Natural killer cell (primary cell): ENCODE measurements at regions of chr9 and their contacts with region 1.

Region 1: DNA sequence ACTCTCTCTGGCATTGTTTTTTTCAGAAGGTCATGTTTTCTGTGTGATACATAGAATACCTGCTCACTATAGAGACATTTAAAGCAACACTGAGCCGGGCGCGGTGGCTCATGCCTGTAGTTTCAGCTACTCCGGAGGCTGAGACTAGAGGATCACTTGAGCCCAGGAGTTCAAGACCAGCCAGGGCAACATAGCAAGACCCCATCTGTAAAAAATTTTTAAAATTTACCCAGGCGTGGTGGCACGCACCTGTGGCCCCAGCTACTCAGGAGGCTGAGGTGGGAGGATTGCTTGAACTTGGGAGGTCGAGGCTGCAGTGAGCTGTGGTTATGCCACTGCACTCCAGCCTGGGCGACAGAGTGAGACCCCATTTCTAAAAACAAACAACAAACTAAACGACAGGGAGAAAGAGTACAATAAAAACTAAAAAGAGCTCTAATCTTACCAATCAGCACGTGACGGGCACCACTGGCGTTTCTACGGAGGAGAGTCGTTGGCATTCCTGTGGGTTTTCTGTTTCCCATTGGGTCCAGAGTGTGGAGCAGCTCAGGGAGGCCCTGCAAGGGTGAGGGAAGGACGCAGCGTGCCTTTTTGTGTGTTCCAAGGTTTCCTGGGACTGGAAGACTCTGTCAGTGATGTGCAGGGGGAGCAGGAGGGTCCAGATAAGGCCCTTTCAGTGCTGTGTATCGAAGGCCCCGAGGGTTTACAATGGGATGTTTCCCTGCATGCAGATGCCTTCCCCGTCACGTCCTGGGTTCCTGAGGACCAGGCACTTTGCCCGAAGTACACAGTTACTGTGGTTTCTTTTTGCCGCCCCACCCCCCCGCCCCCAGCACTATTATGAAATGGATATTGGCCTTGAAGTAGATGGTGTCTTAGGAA is 7.2 kb upstream of the RNU6ATAC start:
- DNase-seq: no peak
- ATAC-seq: no peak
- H3K4me3 ChIP-seq: no peak overlapping the region
- H3K4me3 Mint-ChIP-seq: no peak overlapping the region
- H3K27ac ChIP-seq: no peak overlapping the region
- H3K27ac Mint-ChIP-seq: no peak overlapping the region
- H3K4me1 ChIP-seq: peaks cover 27% of the 10 kb centered on the region
- H3K4me1 Mint-ChIP-seq: no peaks in the 10 kb centered on the region
- H3K27me3 ChIP-seq: no peaks in the 10 kb centered on the region
- H3K27me3 Mint-ChIP-seq: peaks cover 0 to 3% of the 10 kb centered on the region in 2 donors
- CTCF ChIP-seq: no peak

Region 2: DNA sequence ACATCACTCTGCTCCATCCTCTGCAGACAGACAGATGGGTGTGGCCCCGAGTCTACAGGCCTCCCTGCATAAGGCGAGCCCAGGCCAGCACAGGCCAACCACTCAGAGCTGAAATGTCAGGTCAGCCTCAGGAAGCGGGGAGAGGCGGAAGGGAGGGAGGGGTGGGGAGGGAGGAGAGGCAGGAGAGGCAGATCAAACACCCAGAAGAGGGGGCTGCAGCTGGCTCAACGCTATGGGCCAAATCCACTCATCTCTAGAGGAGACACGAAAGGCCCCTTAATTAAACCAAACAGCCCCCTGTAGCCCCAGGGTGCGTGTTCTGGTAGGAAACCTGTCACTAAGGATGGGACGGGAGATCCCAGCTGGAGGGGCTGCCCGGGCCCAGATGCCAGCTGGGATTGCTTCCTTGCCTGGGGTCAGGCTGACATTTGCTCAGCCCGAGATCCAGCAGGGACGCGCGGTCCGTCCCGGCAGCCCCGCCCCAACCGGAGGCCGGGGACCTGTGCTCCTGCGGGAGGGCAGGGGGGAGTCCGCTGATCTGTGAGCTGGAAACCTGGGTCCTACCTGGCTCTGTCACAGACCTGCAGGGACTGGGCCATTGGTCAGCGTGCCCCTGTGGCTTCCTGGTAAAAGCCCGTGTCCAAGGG is 336.2 kb before region 1 on chr9:
- intact Hi-C with region 1: no loop called
- DNase-seq: no peak
- ATAC-seq: no peak
- H3K4me3 ChIP-seq: no peak overlapping the region
- H3K4me3 Mint-ChIP-seq: no peak overlapping the region
- H3K27ac ChIP-seq: no peak overlapping the region
- H3K27ac Mint-ChIP-seq: no peak overlapping the region
- H3K4me1 ChIP-seq: no peaks in the 10 kb centered on the region
- H3K4me1 Mint-ChIP-seq: no peaks in the 10 kb centered on the region
- H3K27me3 ChIP-seq: no peaks in the 10 kb centered on the region
- H3K27me3 Mint-ChIP-seq: no peaks in the 10 kb centered on the region
- CTCF ChIP-seq: no peak

Region 3: DNA sequence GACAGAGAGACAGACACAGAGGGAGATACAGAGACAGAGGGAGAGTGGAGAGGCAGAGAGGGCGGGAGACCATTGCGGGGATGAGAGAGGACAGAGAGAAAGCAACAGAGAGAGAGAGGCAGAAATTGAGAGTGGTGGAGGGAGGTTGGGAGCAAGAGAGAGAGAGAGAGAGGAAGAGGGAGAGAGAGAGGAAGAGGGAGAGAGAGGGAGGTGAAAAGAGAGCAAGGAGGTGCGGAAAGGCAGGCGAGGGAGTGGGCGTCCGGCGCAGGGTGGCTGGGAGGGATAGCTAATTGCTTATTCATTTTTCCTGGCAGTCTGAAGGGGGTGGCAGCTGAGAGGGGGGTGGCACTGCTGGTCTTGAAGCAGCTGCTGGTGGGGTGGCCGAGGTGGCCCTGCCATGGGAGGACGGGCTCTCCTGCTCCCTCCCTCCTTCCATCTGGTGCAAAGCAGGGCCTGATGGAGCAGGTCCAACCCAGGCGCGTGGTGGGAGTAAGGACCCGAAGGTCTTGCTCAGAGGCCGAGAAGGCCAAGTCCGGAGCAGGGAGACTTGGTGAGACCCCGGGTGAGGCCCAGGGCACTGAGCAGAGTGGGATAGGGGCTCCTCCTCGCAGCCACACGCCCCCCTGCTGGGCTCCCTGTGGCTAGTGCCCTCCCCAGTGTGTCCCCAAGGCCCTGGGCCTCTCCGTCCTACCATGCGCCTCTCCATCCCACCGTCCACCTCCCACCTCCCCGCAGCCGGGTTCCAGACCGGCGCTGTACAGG is 18.1 kb after region 1 on chr9:
- intact Hi-C with region 1: no loop called
- DNase-seq: no peak
- ATAC-seq: no peak
- H3K4me3 ChIP-seq: no peak overlapping the region
- H3K4me3 Mint-ChIP-seq: no peak overlapping the region
- H3K27ac ChIP-seq: no peak overlapping the region
- H3K27ac Mint-ChIP-seq: peak overlapping the region in 1 of 2 donors; percentile 15
- H3K4me1 ChIP-seq: peaks cover 13% of the 10 kb centered on the region
- H3K4me1 Mint-ChIP-seq: peaks cover 7 to 22% of the 10 kb centered on the region in 2 donors
- H3K27me3 ChIP-seq: no peaks in the 10 kb centered on the region
- H3K27me3 Mint-ChIP-seq: peaks cover 0 to 10% of the 10 kb centered on the region in 2 donors
- CTCF ChIP-seq: no peak

Region 4: DNA sequence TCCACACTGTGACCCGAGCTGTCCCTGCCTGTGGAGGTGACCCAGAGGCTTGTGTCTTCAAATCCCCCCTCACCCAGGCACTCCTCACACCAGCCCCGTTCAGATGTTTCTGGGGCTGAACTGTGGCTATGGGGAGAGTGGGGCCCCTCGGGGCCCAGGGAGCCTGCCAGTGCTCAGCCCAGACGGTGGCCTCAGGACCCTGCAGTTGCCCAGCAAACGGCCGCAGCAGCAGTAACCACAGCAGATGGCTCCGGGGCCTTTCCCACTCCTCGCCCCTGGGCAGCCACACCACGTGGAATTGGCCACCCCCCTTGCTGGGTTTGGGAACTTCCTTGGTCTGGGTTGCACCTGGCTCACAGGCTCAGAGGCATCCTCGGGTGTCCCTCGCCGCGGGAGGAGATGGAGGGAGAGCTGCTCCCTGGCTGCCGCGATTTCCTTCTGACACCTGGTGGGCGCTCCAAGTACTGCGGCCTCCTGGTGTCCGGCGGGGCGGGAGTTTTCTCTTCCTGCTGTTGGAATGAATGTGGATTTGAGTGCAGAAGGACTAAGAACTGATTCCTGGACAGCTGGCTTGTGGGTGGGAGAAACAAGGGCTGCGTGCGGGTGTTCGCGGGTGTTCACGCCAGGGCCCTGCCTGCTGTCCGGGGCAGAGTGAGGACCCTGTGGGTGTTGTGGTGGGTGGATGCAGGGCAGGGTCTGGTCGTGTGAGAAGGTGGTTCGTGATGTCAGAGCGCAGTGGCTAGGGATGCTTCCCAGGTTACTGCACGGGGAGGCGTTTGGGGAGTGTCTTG is 567.5 kb after region 1 on chr9:
- intact Hi-C with region 1: loop called (anchors 5 kb)
- DNase-seq: peak; percentile 34 to 52
- ATAC-seq: peak in 1 of 3 donors; percentile 51
- H3K4me3 ChIP-seq: no peak overlapping the region
- H3K4me3 Mint-ChIP-seq: no peak overlapping the region
- H3K27ac ChIP-seq: no peak overlapping the region
- H3K27ac Mint-ChIP-seq: no peak overlapping the region
- H3K4me1 ChIP-seq: no peaks in the 10 kb centered on the region
- H3K4me1 Mint-ChIP-seq: no peaks in the 10 kb centered on the region
- H3K27me3 ChIP-seq: no peaks in the 10 kb centered on the region
- H3K27me3 Mint-ChIP-seq: peaks cover 4 to 7% of the 10 kb centered on the region in 2 donors
- CTCF ChIP-seq: peak; percentile 59

Region 5: DNA sequence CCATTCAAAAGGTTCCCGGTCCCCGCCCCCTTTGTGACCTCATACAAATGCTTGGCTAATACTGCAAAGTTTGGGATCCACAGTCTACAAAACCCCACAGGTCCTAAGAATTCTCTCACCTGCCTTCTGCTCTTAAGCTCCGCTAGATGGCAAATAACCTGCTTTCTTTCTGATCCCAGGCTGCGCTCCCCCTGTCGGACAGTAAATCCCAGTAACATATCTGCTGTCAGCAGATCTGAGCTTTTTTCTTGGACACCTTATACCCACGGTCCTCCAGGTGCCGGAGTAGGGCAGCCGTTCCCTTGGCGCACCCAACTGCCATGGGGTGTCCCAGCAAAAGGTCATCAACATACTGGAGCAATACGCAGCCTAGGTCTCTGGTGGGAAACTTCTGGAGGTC is 1269.1 kb after region 1 on chr9:
- intact Hi-C with region 1: no loop called
- DNase-seq: no peak
- ATAC-seq: no peak
- H3K4me3 ChIP-seq: no peak overlapping the region
- H3K4me3 Mint-ChIP-seq: no peak overlapping the region
- H3K27ac ChIP-seq: no peak overlapping the region
- H3K27ac Mint-ChIP-seq: no peak overlapping the region
- H3K4me1 ChIP-seq: no peaks in the 10 kb centered on the region
- H3K4me1 Mint-ChIP-seq: no peaks in the 10 kb centered on the region
- H3K27me3 ChIP-seq: no peaks in the 10 kb centered on the region
- H3K27me3 Mint-ChIP-seq: peaks cover 8 to 9% of the 10 kb centered on the region in 2 donors
- CTCF ChIP-seq: no peak